Activated CD8-positive, alpha-beta memory T cell treated with anti-CD3 and anti-CD28 coated beads, Interleukin-2, amount 10 ng/mL, durations not matched to agents 7 days and 5 days (primary cell): ENCODE measurements at regions of chr7 and their contacts with region 1.

Region 1: DNA sequence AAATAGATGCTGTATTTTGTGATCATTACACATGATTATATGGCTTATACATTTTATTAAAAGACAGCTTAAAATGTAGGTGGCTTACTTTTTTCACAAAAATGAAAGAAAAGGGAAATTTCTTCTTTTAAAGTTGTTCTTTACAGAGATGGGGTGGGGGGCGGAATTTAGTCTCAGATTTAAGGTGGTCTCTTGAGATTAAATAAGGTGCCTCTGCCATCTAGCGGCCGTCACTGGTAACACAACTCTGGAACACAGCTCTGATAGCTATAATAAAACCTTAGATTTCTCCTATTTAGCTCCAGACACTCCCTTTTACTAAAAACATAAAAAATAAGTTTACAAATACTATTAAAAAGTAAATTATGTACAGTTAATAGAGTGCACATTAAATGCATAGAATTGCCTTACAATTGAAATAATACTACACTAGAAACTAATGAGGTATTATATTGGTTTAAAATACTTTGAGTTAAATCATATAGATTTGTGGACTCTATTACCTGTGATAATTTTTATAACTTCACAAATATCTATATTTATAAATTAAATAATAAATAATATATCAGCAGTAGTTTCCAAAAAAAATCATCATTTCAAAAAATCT is 210.9 kb downstream of the DGKB start:
- DNase-seq: peak; percentile 52
- ATAC-seq: no peak
- H3K4me3 Mint-ChIP-seq: no peak overlapping the region
- H3K27ac Mint-ChIP-seq: no peak overlapping the region
- H3K4me1 Mint-ChIP-seq: no peaks in the 10 kb centered on the region
- H3K27me3 Mint-ChIP-seq: peaks cover 3% of the 10 kb centered on the region

Region 2: DNA sequence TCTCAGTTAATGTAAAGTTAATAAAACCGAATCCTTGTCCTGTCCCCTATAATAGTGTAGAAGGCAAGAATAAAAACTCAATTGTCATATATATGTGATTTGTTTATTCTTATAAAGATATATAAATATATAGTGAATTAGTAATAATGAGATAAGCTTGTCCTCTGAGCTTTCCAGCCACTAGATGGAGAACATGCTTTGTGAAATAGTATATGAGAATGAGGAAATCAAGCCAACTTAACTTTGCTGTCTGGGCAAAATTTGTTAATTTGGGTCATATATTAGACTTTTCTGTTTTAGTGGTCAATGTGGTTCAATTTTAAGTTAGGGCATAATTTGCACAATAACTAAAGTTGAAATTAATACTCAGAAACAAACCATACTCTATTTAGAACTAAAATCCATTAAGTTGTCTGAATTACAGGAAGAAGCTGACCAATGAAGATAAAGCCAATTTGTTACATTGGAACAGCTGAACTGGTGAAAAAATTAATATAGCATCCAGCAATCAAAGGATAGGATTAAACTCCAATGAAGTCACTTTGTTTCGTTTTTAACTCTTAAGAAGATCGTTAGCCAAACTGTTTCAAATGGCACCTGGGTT is 1409.2 kb before region 1 on chr7:
- CTCF ChIA-PET with region 1: interaction called, 14 read pairs
- DNase-seq: no peak
- ATAC-seq: no peak
- H3K4me3 Mint-ChIP-seq: no peak overlapping the region
- H3K27ac Mint-ChIP-seq: no peak overlapping the region
- H3K4me1 Mint-ChIP-seq: no peaks in the 10 kb centered on the region
- H3K27me3 Mint-ChIP-seq: peaks cover 11% of the 10 kb centered on the region

Region 3: DNA sequence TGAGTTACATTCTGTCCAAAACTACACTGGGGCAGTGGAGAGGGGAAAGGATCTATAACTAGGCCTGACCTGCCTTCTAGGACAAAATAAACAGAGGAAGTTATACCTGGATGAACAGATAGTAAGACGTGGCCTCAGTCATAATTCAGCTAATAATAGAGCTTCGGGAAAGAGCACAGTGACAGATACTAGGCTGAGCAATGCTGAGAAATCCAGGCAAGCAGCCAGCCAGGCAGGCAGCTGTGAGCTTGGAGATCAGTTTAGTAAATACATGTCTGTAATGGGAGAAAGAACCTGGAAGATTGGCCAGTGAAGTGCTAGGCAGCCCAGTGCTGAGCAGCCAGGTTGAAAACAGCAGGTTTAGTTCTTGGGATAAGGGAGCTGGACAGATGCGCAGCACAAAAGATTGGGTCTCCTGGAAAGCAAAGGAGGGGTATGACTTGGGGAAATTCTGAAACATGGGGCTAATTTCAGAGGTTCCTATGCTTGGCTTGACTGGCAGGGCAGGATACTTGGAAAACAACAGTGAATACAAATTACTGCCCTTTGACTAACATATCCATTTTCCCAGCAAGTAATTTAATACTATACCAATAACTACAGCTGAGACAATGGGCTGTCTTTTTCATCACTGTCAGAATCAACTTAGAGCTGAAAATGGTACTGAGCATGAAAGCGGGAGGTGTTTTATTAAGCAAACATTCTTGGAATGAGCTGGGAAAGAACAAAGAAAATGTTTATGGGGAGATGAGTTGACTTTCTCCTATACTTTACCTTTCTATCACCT is 70.0 kb after region 1 on chr7:
- CTCF ChIA-PET with region 1: no interaction called
- DNase-seq: no peak
- ATAC-seq: no peak
- H3K4me3 Mint-ChIP-seq: no peak overlapping the region
- H3K27ac Mint-ChIP-seq: no peak overlapping the region
- H3K4me1 Mint-ChIP-seq: no peaks in the 10 kb centered on the region
- H3K27me3 Mint-ChIP-seq: no peaks in the 10 kb centered on the region